ENCODE measurements at regions of chr16 and their contacts with region 1.

Region 1: GRCh38 chr16:58515125-58515870 is at the start of gene SETD6:
- DNase-seq: peak; percentile 72 to 78 (median 76)
- H3K4me3 ChIP-seq: peak within 1 kb of the TSS; percentile 68 to 90 (median 75)
- H3K4me3 Mint-ChIP-seq: peak within 1 kb of the TSS; percentile 89 to 97
- H3K27ac ChIP-seq: peak within 1 kb of the TSS; percentile 28 to 71
- H3K27ac Mint-ChIP-seq: peak within 1 kb of the TSS; percentile 57 to 92 (median 87)
- H3K4me1 ChIP-seq: peaks cover 13 to 21% of the 10 kb centered on the region in 2 donors
- H3K4me1 Mint-ChIP-seq: peaks cover 11% of the 10 kb centered on the region
- H3K27me3 ChIP-seq: no peaks in the 10 kb centered on the region
- H3K27me3 Mint-ChIP-seq: peaks cover 0 to 2% (median 0%) of the 10 kb centered on the region in 3 donors
- CTCF ChIP-seq: no peak
- polyA plus RNA-seq, gene SETD6: 2.5 to 13.7 (median 3.4) TPM

Region 2: GRCh38 chr16:58629572-58630104 is 114.3 kb after region 1 on chr16 and contains the start of gene CNOT1:
- intact Hi-C with region 1: loop called (anchors 5 to 10 kb)
- DNase-seq: peak; percentile 99
- H3K4me3 ChIP-seq: peak within 1 kb of the TSS; percentile 73 to 99 (median 83)
- H3K4me3 Mint-ChIP-seq: peak within 1 kb of the TSS; percentile 99
- H3K27ac ChIP-seq: peak within 1 kb of the TSS; percentile 93 to 98
- H3K27ac Mint-ChIP-seq: peak within 1 kb of the TSS; percentile 99 to 100 (median 100)
- H3K4me1 ChIP-seq: peaks cover 17 to 32% of the 10 kb centered on the region in 2 donors
- H3K4me1 Mint-ChIP-seq: peaks cover 19% of the 10 kb centered on the region
- H3K27me3 ChIP-seq: no peaks in the 10 kb centered on the region
- H3K27me3 Mint-ChIP-seq: no peaks in the 10 kb centered on the region
- CTCF ChIP-seq: no peak
- polyA plus RNA-seq, gene CNOT1: 50.8 to 182 (median 60.8) TPM

Region 3: GRCh38 chr16:58661199-58661830 is 146.0 kb after region 1 on chr16:
- intact Hi-C with region 1: loop called (anchors 2 to 10 kb)
- DNase-seq: peak; percentile 70 to 84 (median 81)
- H3K4me3 ChIP-seq: no peak overlapping the region
- H3K4me3 Mint-ChIP-seq: no peak overlapping the region
- H3K27ac ChIP-seq: no peak overlapping the region
- H3K27ac Mint-ChIP-seq: no peak overlapping the region
- H3K4me1 ChIP-seq: no peaks in the 10 kb centered on the region
- H3K4me1 Mint-ChIP-seq: no peaks in the 10 kb centered on the region
- H3K27me3 ChIP-seq: no peaks in the 10 kb centered on the region
- H3K27me3 Mint-ChIP-seq: peaks cover 0 to 6% (median 5%) of the 10 kb centered on the region in 3 donors
- CTCF ChIP-seq: peak; percentile 64